BJ (cell line): ENCODE measurements at regions of chr6 and their contacts with region 1.

Region 1: DNA sequence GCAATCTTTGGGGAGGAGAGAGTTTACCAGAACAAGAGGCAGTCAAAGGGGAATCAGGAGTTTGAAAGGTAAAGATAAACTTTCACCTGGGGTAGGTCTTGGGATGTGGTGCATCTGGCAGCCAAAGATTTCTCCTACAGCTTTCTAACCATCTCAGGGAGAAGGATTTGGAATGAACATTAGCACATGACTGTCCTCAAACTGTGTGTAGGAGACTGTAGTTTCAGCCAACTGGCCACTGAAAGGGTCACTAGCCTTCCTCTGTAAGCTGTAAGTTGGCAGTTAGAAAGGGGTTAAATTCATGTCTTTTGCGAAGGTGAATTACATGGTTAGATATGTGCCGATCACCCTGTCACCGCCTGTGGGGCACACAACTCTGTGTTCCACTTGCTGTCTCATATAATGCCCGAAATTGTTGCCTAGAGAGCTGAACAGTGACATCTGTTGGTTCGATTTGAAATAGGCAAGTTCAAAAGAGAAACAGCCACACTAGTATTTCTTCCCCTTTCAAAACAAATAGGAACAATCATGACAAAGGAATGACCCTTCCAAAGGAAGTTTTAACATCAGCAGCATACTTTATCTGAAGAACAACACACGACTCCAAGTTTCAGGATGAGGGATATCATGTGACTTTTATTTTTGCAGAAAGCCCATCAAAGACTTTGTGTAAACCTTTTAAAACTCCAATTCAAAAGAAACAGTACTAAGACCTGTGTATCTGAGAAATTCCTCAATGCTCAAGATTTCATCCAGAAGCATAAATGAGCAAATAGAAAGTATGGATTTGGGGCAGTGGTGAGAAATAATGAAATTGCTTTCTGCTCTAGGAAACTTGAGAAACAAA is 1.1 kb upstream of the OPN5 start:
- DNase-seq: peak; percentile 26
- H3K4me3 ChIP-seq: no peak overlapping the region
- H3K27me3 ChIP-seq: 0 out of 2 replicates have a peak, but pooled peaks cover 1% of the 10 kb centered on the region
- CTCF ChIP-seq: peak; percentile 69

Region 2: DNA sequence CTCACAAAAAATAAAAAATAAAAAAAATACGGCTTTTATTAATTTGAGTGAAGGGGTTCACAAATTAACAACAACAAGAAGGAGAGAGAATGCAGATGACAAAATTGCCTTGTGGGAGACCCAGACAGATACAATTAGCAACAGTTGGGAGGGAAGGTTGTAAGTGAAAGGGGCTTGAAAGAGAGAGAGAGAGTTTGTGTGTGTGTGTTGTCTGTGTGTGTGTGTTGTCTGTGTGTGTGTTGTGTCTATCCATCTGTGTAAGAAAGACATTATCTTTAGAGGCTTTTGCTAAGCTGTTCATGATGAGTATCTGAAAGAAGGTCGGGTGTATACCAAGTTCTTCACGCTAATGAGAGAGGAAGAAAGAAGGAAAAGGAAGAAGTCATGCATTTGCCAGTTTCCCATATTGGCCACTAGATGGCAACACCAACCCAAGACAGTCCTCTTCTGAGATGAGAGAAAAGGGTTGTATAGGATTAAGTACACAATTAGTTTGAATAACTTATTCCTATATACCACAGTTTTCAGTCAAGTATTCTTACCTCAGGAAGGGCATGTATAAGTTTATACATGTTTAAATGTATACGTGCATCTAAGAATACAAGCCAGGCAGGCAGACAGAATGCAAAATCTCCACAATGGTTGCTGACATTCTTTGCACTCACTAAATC is 366.8 kb before region 1 on chr6:
- CTCF ChIA-PET with region 1: interaction called, 27 read pairs
- POLR2A ChIA-PET with region 1: no interaction called
- DNase-seq: peak; percentile 16
- H3K4me3 ChIP-seq: peak overlapping the region; percentile 45
- H3K27me3 ChIP-seq: no peaks in the 10 kb centered on the region; the same call in 1 of the 2 replicates
- CTCF ChIP-seq: peak; percentile 89

Region 3: DNA sequence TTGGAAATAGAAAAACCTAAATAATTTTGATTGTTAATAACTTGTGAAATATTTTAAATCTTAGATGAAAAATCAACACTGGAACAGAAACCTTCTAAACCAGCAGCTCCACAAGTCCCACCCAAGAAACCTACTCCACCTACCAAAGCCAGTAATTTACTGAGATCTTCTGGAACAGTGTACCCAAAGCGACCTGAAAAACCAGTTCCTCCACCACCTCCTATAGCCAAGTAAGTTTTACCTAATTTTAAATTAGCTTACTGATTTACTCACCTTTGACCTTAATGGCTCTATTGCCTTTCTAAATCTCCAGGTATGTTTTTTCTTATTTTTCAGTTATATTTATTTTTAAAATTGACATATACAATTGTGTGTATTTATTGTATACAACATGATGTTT is 184.9 kb before region 1 on chr6:
- CTCF ChIA-PET with region 1: no interaction called
- POLR2A ChIA-PET with region 1: no interaction called
- DNase-seq: no peak
- H3K4me3 ChIP-seq: no peak overlapping the region
- H3K27me3 ChIP-seq: no peaks in the 10 kb centered on the region
- CTCF ChIP-seq: no peak

Region 4: DNA sequence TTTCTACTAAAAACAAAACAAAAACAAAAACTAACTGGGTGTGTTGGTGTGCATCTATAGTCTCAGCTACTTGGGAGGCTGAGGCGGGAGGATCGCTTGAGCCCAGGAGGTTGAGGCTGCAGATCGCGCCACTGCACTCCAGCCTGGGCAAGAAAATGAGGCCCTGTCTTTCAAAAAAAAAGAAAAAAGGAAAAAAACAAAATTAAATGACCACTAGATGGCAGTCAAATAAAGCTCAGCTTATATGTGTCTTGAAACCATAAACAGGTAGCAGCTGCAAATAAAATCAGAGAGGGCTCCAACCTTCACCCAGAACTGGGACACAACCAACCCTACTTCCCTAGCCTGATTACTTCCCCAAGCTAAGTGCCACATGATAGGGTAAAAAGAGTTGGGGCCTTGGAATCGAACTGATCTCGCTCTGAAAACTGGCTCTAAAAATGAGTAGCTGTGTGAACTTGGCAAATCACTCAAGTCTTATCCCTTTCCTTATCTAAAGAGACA is 149.4 kb before region 1 on chr6:
- CTCF ChIA-PET with region 1: interaction called, 51 read pairs
- POLR2A ChIA-PET with region 1: no interaction called
- DNase-seq: peak; percentile 5
- H3K4me3 ChIP-seq: no peak overlapping the region
- H3K27me3 ChIP-seq: no peaks in the 10 kb centered on the region
- CTCF ChIP-seq: peak; percentile 52